ENCODE measurements at regions of chr20 and their contacts with region 1.

Region 1: DNA sequence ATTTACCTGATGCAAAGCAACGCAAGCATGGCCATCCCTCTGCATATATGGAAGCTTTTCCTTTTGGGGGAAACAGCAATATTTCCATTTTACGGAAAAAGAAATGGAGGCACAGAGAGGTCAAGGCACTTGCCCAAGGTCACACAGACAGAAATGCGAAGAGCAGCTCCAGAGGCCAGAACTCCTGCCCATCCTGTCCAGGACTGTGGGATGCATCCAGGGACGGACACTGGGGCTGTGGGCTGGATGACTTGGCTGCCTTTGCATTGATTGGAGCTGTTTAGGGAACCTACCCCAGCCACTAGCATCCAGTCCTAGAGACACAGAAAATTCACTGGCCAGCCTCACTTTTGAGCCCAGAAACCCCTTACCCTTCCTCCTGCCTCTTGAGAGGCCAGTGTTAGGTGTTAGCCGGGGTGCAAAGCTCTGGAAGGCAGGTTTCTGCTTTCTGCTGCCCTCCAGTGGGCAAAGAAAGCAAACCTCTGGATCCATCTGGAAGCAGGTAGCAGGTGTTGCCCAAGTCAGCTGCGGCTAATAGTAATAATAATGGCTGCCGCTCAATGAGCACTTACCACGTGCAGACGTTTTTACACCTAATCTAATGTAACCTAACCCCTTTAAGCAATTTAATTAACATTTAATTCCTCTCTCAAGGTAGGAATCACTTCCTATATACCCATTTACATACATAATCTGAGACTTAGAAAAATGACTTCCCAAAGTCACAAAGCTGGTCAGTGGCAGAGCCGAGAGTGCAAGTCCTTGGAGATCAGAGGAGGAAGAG is 31.7 kb upstream of the CCN5 start:
- DNase-seq: peak; percentile 46
- H3K4me3 ChIP-seq: no peak overlapping the region
- H3K27ac ChIP-seq: no peak overlapping the region
- H3K4me1 ChIP-seq: peaks cover 22% of the 10 kb centered on the region
- H3K27me3 ChIP-seq: no peaks in the 10 kb centered on the region
- CTCF ChIP-seq: peak; percentile 81

Region 2: GRCh38 chr20:44388466-44389023 is 294.9 kb before region 1 on chr20:
- intact Hi-C with region 1: loop called (anchors 10 kb)
- DNase-seq: peak; percentile 62
- H3K4me3 ChIP-seq: no peak overlapping the region
- H3K27ac ChIP-seq: no peak overlapping the region
- H3K4me1 ChIP-seq: peaks cover 9% of the 10 kb centered on the region
- H3K27me3 ChIP-seq: peaks cover 35% of the 10 kb centered on the region
- CTCF ChIP-seq: peak; percentile 78

Region 3: GRCh38 chr20:44532259-44532980 is 151.0 kb before region 1 on chr20:
- intact Hi-C with region 1: no loop called
- DNase-seq: peak; percentile 34
- H3K4me3 ChIP-seq: peak overlapping the region; percentile 80
- H3K27ac ChIP-seq: peak overlapping the region; percentile 80
- H3K4me1 ChIP-seq: peaks cover 27% of the 10 kb centered on the region
- H3K27me3 ChIP-seq: no peaks in the 10 kb centered on the region
- CTCF ChIP-seq: no peak

Region 4: GRCh38 chr20:44598423-44599305 is 84.8 kb before region 1 on chr20:
- intact Hi-C with region 1: no loop called
- DNase-seq: peak; percentile 63
- H3K4me3 ChIP-seq: peak overlapping the region; percentile 51
- H3K27ac ChIP-seq: peak overlapping the region; percentile 93
- H3K4me1 ChIP-seq: peaks cover 100% of the 10 kb centered on the region
- H3K27me3 ChIP-seq: no peaks in the 10 kb centered on the region
- CTCF ChIP-seq: peak; percentile 33

Region 5: DNA sequence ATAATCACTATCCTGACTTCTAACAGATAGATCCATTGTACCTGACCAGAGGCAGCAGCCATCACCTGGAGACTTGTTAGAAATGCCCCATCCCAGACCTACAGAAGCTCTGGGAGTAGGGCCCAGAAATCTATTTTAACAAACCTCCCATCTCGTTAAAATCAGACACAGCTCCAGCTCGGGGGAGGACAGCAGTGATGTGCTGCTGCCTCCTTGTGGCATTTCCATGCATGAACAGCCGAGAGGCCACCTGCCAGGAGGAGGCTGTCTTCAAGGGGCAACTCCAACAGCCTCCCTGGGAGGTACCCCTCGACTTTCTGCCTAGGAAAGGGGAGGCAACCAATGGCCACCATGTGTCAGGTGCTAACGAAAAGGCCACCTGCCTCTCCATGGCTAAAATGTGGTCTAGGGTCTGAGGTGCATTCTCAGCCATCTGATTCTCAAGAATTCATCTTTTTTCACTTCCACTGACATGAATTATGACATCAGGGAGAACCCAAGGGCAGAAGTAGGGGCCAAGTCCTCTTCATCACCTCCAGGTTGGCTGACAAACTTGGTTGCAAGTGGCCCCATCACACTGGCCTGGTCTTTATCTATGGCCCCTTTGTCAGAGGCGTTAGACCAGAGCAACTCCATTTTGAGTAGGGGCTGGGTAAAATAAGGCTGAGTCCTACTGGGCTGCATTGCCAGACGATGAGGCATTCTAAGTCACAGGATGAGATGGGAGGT is 50.0 kb after region 1 on chr20:
- intact Hi-C with region 1: loop called (anchors 1 kb)
- DNase-seq: peak; percentile 60
- H3K4me3 ChIP-seq: no peak overlapping the region
- H3K27ac ChIP-seq: no peak overlapping the region
- H3K4me1 ChIP-seq: peaks cover 56% of the 10 kb centered on the region
- H3K27me3 ChIP-seq: no peaks in the 10 kb centered on the region
- CTCF ChIP-seq: peak; percentile 97

Region 6: GRCh38 chr20:44866703-44867335 is 183.4 kb after region 1 on chr20:
- intact Hi-C with region 1: loop called (anchors 5 kb)
- DNase-seq: no peak
- H3K4me3 ChIP-seq: no peak overlapping the region
- H3K27ac ChIP-seq: no peak overlapping the region
- H3K4me1 ChIP-seq: peaks cover 28% of the 10 kb centered on the region
- H3K27me3 ChIP-seq: no peaks in the 10 kb centered on the region
- CTCF ChIP-seq: no peak